ENCODE measurements at regions of chr7 and their contacts with region 1.

Region 1: GRCh38 chr7:29345600-29345999 is 151.0 kb downstream of the CHN2 start:
- DNase-seq: no peak
- H3K4me3 Mint-ChIP-seq: no peak overlapping the region
- H3K27ac Mint-ChIP-seq: no peak overlapping the region
- H3K4me1 Mint-ChIP-seq: no peaks in the 10 kb centered on the region
- H3K27me3 Mint-ChIP-seq: peaks cover 19% of the 10 kb centered on the region

Region 2: GRCh38 chr7:29189743-29190201 is 155.8 kb before region 1 on chr7:
- intact Hi-C with region 1: loop called (anchors 2 kb)
- DNase-seq: peak; percentile 24
- H3K4me3 Mint-ChIP-seq: no peak overlapping the region
- H3K27ac Mint-ChIP-seq: no peak overlapping the region
- H3K4me1 Mint-ChIP-seq: peaks cover 2% of the 10 kb centered on the region
- H3K27me3 Mint-ChIP-seq: peaks cover 47% of the 10 kb centered on the region

Region 3: DNA sequence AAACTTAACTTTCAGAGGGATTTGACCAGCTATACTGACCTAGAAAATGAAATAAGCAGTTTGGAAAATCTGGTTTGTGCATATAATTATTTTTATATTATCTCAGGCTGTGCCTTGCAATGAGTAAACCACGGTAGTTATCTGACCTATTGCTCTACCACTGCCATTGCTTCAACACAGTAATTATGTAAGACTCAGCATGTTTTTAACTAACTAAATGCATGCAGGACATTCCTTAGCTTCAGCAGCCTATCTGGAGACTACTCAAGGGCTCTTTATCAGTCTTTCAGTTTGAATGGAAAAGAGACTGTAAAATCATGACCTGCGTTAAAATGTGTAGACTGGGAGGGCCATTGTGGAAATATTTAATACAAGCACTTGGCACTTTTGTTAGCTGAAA is 128.5 kb before region 1 on chr7:
- intact Hi-C with region 1: loop called (anchors 10 kb)
- DNase-seq: no peak
- H3K4me3 Mint-ChIP-seq: no peak overlapping the region
- H3K27ac Mint-ChIP-seq: no peak overlapping the region
- H3K4me1 Mint-ChIP-seq: no peaks in the 10 kb centered on the region
- H3K27me3 Mint-ChIP-seq: peaks cover 8% of the 10 kb centered on the region

Region 4: DNA sequence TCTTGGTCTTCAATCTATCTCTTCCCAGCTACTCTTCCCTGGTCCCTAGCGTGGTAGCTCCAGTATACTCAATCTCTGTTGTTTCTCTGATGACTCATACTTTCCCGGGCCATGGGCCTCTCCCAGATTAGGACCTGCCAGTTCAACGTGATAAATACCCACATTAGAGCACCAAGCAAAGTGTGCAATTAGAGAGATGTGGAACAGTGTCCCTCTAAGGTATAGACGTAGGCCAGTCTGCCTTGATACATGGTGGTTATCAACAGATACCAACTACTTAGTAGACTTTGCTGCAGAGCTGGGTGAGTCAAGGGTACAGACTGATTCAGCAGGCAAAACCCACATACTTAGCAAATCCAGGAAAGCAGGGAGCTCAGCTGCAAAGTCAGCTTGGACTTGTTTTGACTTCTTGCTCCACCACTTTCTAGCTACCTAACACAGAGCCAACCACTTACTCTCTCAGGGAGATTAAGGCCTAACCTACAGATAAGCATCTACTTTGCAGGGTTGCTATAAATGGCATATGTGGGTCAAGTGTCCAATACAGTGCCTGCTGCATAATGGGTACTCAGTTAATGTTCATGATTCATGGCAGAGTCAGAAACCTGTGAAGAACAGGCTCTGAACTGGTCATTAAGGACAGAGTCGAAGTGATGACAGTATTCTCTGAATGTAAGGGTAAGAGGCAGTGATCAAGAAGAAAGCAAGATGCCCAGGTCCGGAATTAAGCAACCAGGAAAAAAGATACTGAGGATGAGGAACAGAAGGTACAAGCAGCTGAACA is 25.1 kb after region 1 on chr7:
- intact Hi-C with region 1: no loop called
- DNase-seq: no peak
- H3K4me3 Mint-ChIP-seq: no peak overlapping the region
- H3K27ac Mint-ChIP-seq: no peak overlapping the region
- H3K4me1 Mint-ChIP-seq: no peaks in the 10 kb centered on the region
- H3K27me3 Mint-ChIP-seq: peaks cover 4% of the 10 kb centered on the region

Region 5: DNA sequence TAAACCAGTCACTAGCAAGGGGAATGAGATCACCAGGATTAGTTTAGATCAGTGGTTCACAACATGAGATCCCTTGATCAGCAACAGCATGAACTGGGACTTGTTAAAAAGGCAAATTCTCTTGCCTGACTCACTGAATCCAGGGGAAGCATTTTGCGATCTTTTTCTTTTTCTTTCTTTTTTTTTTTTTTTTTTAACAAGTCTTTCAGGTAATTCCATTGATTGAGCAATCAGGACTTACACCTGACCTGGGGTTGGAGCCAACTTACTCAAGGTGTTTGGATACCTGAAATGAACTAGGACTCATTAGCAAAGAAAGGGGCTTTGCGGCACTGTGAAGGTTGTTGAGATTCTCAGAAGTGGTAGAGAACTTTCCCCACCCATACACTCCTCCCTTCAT is 170.9 kb after region 1 on chr7:
- intact Hi-C with region 1: no loop called
- DNase-seq: no peak
- H3K4me3 Mint-ChIP-seq: no peak overlapping the region
- H3K27ac Mint-ChIP-seq: no peak overlapping the region
- H3K4me1 Mint-ChIP-seq: no peaks in the 10 kb centered on the region
- H3K27me3 Mint-ChIP-seq: no peaks in the 10 kb centered on the region

Measured in activated T-helper 2 cell treated with anti-CD3 and anti-CD28 coated beads, Interferon-gamma antibody, Interleukin-2, Interleukin-4, amounts not matched to agents 10 μg/mL and 5 μg/mL and 100 μg/mL, durations not matched to agents 14 hours and 24 hours and 36 hours (primary cell).